CD14-positive monocyte (primary cell): ENCODE measurements at regions of chr1 and their contacts with region 1.

Region 1: GRCh38 chr1:22749919-22750688 is 39.5 kb downstream of the EPHB2 start:
- DNase-seq: peak; percentile 83 to 93 (median 90)
- H3K4me3 ChIP-seq: peak overlapping the region in 1 of 3 experiments; percentile 19
- H3K4me3 Mint-ChIP-seq: peak overlapping the region in 1 of 2 donors; percentile 78
- H3K27ac ChIP-seq: peak overlapping the region; percentile 94 to 97
- H3K27ac Mint-ChIP-seq: peak overlapping the region; percentile 95 to 99 (median 99)
- H3K4me1 ChIP-seq: peaks cover 51 to 58% of the 10 kb centered on the region in 2 donors
- H3K4me1 Mint-ChIP-seq: peaks cover 51% of the 10 kb centered on the region
- H3K27me3 ChIP-seq: no peaks in the 10 kb centered on the region
- H3K27me3 Mint-ChIP-seq: peaks cover 0 to 5% (median 2%) of the 10 kb centered on the region in 3 donors
- CTCF ChIP-seq: no peak

Region 2: DNA sequence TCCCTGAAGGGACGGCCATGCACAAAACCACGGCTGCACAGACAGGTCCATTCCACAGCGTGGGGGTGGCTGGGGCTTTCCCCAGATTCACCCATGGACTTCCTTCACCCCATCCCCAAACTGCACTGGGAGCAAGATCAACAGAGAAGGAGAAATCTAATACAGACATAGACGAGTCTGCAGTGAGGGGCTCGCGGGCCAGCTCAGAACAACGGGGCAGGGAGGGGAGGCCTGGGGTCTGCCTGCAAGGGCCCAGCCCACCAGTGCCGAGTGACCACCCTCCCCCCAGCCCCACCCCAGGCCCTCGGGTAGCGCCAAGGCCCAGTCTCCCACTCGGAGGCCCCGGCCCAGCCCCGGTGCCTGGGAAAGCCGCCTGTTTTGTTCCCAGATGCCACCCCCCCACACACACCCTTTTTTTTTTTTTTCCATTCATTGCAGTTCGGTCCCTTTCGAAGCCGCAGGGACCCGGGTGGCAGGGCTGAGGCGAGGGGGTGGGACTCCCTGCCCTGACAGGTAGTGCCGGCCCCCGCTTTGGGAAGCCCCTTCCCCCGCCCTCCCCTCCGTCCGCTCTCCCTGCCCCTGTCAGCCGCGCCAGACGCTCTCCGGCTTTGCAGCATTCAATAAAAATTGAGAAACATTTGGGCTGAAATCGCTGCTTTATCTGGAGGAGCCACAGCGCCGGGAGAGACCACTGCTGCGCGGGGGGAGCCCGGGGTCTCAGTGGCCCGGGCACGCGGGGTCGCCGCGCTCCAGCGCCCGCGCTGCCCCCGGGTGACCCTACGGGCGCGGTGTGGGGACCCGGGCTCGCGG is 40.0 kb before region 1 on chr1:
- intact Hi-C with region 1: loop called in 1 of 2 experiments (anchors 5 kb)
- DNase-seq: peak; percentile 59 to 63 (median 60)
- H3K4me3 ChIP-seq: peak overlapping the region; percentile 18 to 77 (median 33)
- H3K4me3 Mint-ChIP-seq: peak overlapping the region; percentile 66 to 87
- H3K27ac ChIP-seq: peak overlapping the region in 1 of 2 donors; percentile 1
- H3K27ac Mint-ChIP-seq: peak overlapping the region in 3 of 7 donors; percentile 61 to 76 (median 66)
- H3K4me1 ChIP-seq: peaks cover 27 to 49% of the 10 kb centered on the region in 2 donors
- H3K4me1 Mint-ChIP-seq: peaks cover 29% of the 10 kb centered on the region
- H3K27me3 ChIP-seq: peaks cover 14 to 40% of the 10 kb centered on the region in 2 donors
- H3K27me3 Mint-ChIP-seq: peaks cover 37 to 51% (median 38%) of the 10 kb centered on the region in 3 donors
- CTCF ChIP-seq: no peak

Region 3: DNA sequence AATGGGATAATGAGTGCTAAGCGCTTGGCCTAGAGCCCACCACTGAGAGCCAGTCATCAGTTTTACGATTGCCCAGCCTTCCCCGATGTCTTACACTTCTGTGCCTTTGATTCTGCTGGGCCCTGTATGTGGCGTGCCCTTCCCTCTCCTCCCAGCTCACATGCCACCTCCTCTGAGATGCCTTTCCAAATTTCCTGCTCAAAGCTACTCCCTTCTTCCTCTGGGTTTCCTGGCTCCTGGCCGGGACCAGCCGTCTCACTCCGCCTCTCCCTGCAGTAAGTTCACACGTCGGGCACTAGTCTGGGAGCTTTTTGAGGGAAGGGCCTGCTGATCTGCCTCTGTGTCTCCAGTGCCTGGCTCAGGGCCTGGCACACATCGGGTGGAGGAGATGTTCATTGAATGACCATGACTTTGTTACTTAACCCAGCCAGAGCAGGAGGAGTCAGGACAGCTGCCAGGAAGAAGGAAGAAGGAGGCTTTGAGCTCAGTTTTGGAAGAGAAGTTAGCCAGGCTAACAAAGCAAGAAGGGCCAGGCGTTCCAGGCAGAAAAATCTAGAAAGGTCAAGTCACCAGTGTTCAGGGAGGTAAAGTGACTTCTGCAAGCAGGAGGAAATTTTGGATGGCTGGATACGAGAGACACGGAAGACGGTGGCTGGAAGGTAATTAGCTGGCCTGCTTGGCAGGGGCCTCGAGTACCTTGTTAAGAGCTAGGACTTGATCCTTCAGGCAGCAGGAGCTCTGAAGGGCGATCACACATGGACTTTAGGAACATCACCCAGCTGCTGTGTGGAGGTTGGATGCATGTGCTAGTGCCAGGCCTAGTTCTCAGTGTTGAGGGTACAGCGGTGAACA is 24.1 kb after region 1 on chr1:
- intact Hi-C with region 1: no loop called
- DNase-seq: no peak
- H3K4me3 ChIP-seq: no peak overlapping the region
- H3K4me3 Mint-ChIP-seq: no peak overlapping the region
- H3K27ac ChIP-seq: no peak overlapping the region
- H3K27ac Mint-ChIP-seq: peak overlapping the region in 2 of 7 donors; percentile 6 to 54
- H3K4me1 ChIP-seq: no peaks in the 10 kb centered on the region
- H3K4me1 Mint-ChIP-seq: no peaks in the 10 kb centered on the region
- H3K27me3 ChIP-seq: peaks cover 0 to 2% of the 10 kb centered on the region in 2 donors
- H3K27me3 Mint-ChIP-seq: peaks cover 7 to 24% (median 16%) of the 10 kb centered on the region in 3 donors
- CTCF ChIP-seq: no peak